ENCODE measurements at regions of chrX and their contacts with region 1.

Region 1: DNA sequence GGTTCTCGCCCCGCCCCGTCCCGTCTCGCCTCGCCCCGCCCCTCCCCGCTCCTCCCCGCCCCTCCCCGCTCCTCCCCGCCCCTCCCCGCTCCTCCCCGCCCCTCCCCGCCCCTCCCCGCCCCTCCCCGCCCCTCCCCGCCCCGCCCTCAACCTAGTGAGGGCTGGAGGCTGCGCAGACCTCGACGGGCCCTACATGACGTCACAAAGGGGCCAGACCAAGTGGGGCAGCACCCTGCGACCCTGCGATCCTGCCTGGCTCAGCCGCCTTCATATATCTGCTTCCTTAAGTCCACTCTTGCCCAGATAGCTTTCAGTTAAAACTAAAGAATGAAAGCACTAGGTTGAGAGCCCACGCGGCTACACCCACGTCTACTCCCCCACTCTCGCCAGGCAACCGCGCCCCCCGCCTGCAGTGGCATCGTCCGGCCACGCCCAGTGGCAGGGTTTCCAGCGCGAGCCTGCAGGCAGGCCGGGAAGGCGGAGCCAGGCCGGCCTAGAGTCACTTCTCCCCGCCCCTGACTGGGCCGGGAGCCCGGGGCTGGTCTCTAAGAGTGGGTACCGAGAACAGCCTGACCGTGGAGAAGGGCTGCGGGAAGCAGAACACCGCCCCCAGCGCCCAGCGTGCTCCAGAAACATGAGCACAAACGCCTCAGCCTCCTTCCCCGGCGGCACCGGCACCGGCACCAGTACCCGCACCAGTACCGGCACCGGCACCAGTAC is 1.5 kb upstream of the MAOA start:
- DNase-seq: peak; percentile 87
- H3K4me3 ChIP-seq: peak overlapping the region; percentile 42 to 71 (median 71)
- H3K27ac ChIP-seq: peak overlapping the region; percentile 88
- H3K4me1 ChIP-seq: peaks cover 2% of the 10 kb centered on the region
- H3K27me3 ChIP-seq: no peaks in the 10 kb centered on the region
- CTCF ChIP-seq: peak in 1 of 2 donors; percentile 43

Region 2: DNA sequence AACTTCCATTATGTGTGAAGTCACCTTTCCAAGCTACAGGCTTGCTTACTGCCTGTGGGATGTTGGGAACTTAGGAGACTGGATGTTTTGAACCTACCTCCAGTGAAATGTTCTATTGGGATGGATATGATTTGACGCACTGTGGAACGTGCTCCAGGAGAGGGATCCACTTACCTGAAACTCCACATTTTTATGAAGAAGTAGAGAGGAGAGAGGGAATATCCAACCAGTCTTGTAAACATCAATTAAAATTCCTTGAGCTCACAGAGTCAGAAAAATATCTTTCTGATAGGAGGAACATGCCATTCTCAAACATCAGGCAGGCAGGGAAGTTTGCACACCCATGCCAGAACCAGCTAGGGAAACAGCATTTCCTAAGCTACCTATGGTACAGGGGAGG is 89.6 kb before region 1 on chrX:
- CTCF ChIA-PET with region 1: no interaction called
- dilution Hi-C with region 1: no loop called
- in situ Hi-C with region 1: no loop called
- intact Hi-C with region 1: loop called (anchors 2 kb)
- DNase-seq: no peak
- H3K4me3 ChIP-seq: no peak overlapping the region
- H3K27ac ChIP-seq: no peak overlapping the region
- H3K4me1 ChIP-seq: peaks cover 3% of the 10 kb centered on the region
- H3K27me3 ChIP-seq: no peaks in the 10 kb centered on the region
- CTCF ChIP-seq: peak; percentile 15 to 36

Region 3: GRCh38 chrX:43589735-43590134 is 64.9 kb before region 1 on chrX:
- CTCF ChIA-PET with region 1: no interaction called
- dilution Hi-C with region 1: no loop called
- in situ Hi-C with region 1: loop called in 1 of 2 experiments (anchors 5 kb)
- intact Hi-C with region 1: loop called (anchors 2 kb)
- DNase-seq: peak; percentile 56
- H3K4me3 ChIP-seq: no peak overlapping the region
- H3K27ac ChIP-seq: peak overlapping the region; percentile 70
- H3K4me1 ChIP-seq: peaks cover 20% of the 10 kb centered on the region
- H3K27me3 ChIP-seq: no peaks in the 10 kb centered on the region
- CTCF ChIP-seq: no peak

Region 4: GRCh38 chrX:43703211-43703791 is 48.7 kb after region 1 on chrX:
- CTCF ChIA-PET with region 1: no interaction called
- dilution Hi-C with region 1: no loop called
- in situ Hi-C with region 1: no loop called
- intact Hi-C with region 1: no loop called
- DNase-seq: no peak
- H3K4me3 ChIP-seq: no peak overlapping the region
- H3K27ac ChIP-seq: peak overlapping the region; percentile 44
- H3K4me1 ChIP-seq: peaks cover 17% of the 10 kb centered on the region
- H3K27me3 ChIP-seq: peaks cover 6% of the 10 kb centered on the region
- CTCF ChIP-seq: no peak

Region 5: DNA sequence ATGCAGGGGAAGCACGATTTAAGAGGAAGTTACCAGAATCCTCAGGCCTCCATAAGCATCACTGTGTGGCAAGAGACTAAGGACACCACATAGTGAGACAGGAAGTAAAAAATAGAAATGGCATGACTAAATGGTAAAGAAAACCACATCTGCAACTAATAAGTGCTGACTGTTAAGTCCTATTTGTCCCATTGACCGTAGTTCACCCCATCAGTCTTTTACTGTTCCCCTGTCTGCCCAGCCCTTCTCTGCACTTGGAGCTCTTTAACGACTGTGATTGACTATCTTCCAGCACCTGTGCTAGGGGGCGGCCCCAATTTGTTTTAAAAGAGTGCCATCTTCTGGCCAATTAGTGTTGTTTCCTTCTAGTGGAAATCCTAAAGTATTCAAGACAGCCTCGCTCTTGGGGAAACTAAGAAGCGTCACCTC is 95.7 kb after region 1 on chrX:
- CTCF ChIA-PET with region 1: interaction called, 3 read pairs
- dilution Hi-C with region 1: no loop called
- in situ Hi-C with region 1: no loop called
- intact Hi-C with region 1: loop called (anchors 2 kb)
- DNase-seq: peak; percentile 51
- H3K4me3 ChIP-seq: no peak overlapping the region
- H3K27ac ChIP-seq: no peak overlapping the region
- H3K4me1 ChIP-seq: no peaks in the 10 kb centered on the region
- H3K27me3 ChIP-seq: no peaks in the 10 kb centered on the region
- CTCF ChIP-seq: peak; percentile 47 to 52

Region 6: DNA sequence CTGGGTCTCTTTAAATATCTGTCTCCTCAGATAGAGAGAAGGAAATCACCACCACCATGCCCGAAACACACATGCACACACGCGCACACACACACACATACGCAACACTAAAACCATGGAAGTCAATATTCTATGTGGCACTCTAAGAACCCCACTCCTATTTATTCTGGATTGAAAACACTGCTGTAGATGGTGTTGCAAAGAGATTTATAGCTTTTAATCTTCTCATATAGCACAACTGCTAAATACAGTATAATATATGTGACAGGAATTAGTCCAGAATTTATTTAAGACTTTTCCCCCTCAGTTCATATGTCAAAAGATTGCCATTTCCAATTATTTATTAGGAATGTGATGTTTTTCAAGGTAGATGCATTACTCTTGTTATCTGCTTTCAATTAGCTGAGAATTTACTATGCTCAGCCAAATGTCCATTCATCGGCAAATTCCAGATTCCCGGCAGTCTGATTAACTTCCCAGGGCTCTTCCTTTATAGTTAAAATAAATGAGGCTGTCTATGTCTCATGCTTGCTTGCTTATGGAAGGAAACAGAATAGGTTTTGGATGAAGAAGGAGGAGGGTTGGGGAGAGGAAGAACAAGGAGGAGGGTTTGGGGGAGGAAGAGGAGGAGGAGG is 434.0 kb after region 1 on chrX:
- CTCF ChIA-PET with region 1: no interaction called
- dilution Hi-C with region 1: no loop called
- in situ Hi-C with region 1: no loop called
- intact Hi-C with region 1: no loop called
- DNase-seq: no peak
- H3K4me3 ChIP-seq: no peak overlapping the region
- H3K27ac ChIP-seq: no peak overlapping the region
- H3K4me1 ChIP-seq: no peaks in the 10 kb centered on the region
- H3K27me3 ChIP-seq: no peaks in the 10 kb centered on the region
- CTCF ChIP-seq: no peak